ENCODE measurements at regions of chr1 and their contacts with region 1.

Region 1: DNA sequence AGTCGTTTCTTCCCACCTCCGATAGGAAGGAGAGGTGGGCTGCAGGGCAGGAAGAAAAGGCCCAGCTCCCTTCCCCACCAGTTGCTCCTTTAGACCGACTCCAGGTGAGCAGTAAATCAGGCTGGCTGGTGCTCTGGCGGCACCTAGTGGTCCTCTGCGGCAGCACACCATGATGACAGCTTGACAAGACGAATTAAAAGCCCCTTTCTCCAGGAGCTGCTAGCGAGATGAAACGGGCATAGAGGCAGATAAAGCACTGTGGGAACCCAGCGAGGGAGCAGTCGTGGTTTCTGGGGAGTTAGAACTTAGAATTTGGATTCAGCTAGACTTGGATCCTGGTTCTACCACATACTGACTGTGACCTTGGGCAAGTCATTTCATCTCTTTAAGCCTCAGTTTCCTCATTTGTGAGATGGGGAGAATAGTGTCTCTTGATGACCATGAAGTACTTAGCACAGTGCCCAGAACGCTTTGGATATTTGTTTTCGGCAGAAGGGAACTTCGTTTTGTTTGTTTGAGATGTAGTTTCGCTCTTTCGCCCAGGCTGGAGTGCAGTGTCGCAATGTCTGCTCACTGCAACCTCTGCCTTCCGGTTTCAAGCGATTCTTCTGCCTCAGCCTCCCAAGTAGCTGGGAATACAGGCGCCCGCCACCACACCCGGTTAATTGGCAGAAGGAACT is 21.8 kb upstream of the COL9A2 start:
- DNase-seq: peak; percentile 84
- ATAC-seq: peak; percentile 93
- H3K4me3 ChIP-seq: peak overlapping the region in 1 of 2 experiments; percentile 17; a peak in 2 of 4 replicates
- H3K27ac ChIP-seq: no peak overlapping the region
- H3K4me1 ChIP-seq: peaks cover 3% of the 10 kb centered on the region; the same call in 1 of the 2 replicates
- H3K27me3 ChIP-seq: no peaks in the 10 kb centered on the region
- CTCF ChIP-seq: peak; percentile 99

Region 2: GRCh38 chr1:40078512-40079333 is 260.2 kb before region 1 on chr1:
- CTCF ChIA-PET with region 1: interaction called, 6 read pairs
- POLR2A ChIA-PET with region 1: no interaction called
- in situ Hi-C with region 1: no loop called
- intact Hi-C with region 1: loop called (anchors 5 kb)
- DNase-seq: no peak
- ATAC-seq: peak; percentile 87
- H3K4me3 ChIP-seq: no peak overlapping the region
- H3K27ac ChIP-seq: no peak overlapping the region
- H3K4me1 ChIP-seq: no peaks in the 10 kb centered on the region
- H3K27me3 ChIP-seq: no peaks in the 10 kb centered on the region
- CTCF ChIP-seq: peak; percentile 90

Region 3: GRCh38 chr1:40143891-40144575 is 194.9 kb before region 1 on chr1:
- CTCF ChIA-PET with region 1: interaction called, 37 read pairs
- POLR2A ChIA-PET with region 1: no interaction called
- in situ Hi-C with region 1: no loop called
- intact Hi-C with region 1: no loop called
- DNase-seq: peak; percentile 43
- ATAC-seq: peak; percentile 95
- H3K4me3 ChIP-seq: no peak overlapping the region
- H3K27ac ChIP-seq: no peak overlapping the region
- H3K4me1 ChIP-seq: peaks cover 14% of the 10 kb centered on the region
- H3K27me3 ChIP-seq: peaks cover 26% of the 10 kb centered on the region
- CTCF ChIP-seq: peak; percentile 84

Region 4: DNA sequence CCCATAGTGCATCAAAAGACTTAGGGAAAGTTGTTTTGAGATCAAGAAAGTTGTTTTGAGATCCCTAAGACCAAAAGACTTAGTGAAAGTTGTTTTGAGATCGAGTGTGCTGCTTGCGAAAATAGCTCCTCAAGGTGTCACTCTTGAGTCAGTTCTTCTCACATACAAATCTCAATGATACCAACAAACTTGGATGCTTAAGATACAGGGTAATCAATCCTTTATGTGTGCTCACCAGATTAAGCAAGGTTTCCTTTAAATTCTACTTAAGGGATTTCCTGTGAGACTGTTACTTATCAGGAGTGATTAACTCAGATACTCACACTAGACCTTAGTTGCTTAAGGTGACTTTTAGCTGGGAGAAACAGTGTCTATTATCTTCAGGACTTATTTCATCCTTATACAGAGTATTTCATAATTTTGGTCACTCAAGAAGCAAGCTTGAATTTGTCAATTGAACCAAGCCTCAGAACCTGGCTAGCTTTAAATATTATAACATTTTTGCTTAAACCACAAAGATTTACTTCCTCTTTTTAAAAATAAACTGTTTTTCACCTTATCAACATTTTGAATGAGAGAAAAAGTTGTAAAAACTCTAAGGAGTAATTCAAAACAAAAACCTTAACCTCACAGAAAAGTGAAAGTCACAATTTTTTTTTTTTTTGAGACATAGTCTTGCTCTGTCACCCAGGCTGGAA is 185.7 kb before region 1 on chr1:
- CTCF ChIA-PET with region 1: interaction called, 18 read pairs
- POLR2A ChIA-PET with region 1: no interaction called
- in situ Hi-C with region 1: no loop called
- intact Hi-C with region 1: loop called (anchors 2 kb)
- DNase-seq: peak; percentile 59
- ATAC-seq: peak; percentile 70
- H3K4me3 ChIP-seq: peak overlapping the region in 1 of 2 experiments; percentile 15; a peak in 2 of 4 replicates
- H3K27ac ChIP-seq: no peak overlapping the region
- H3K4me1 ChIP-seq: no peaks in the 10 kb centered on the region; the same call in 1 of the 2 replicates
- H3K27me3 ChIP-seq: no peaks in the 10 kb centered on the region; the same call in 1 of the 2 replicates
- CTCF ChIP-seq: peak; percentile 79; the same call in 1 of the 2 replicates

Region 5: GRCh38 chr1:40161125-40161887 is 177.6 kb before region 1 on chr1 and contains the start of gene RLF:
- CTCF ChIA-PET with region 1: interaction called, 12 read pairs
- POLR2A ChIA-PET with region 1: no interaction called
- in situ Hi-C with region 1: no loop called
- intact Hi-C with region 1: no loop called
- DNase-seq: peak; percentile 62
- ATAC-seq: peak; percentile 99
- H3K4me3 ChIP-seq: peak within 1 kb of the TSS; percentile 62 to 98
- H3K27ac ChIP-seq: peak within 1 kb of the TSS; percentile 97
- H3K4me1 ChIP-seq: peaks cover 9% of the 10 kb centered on the region; the same call in 1 of the 2 replicates
- H3K27me3 ChIP-seq: no peaks in the 10 kb centered on the region
- CTCF ChIP-seq: no peak
- total RNA-seq, gene RLF: 15.7 TPM

Region 6: GRCh38 chr1:40178200-40178599 is 160.7 kb before region 1 on chr1:
- CTCF ChIA-PET with region 1: no interaction called
- POLR2A ChIA-PET with region 1: no interaction called
- in situ Hi-C with region 1: no loop called
- intact Hi-C with region 1: no loop called
- DNase-seq: no peak
- ATAC-seq: no peak
- H3K4me3 ChIP-seq: no peak overlapping the region
- H3K27ac ChIP-seq: no peak overlapping the region
- H3K4me1 ChIP-seq: 0 out of 2 replicates have a peak, but pooled peaks cover under 1% of the 10 kb centered on the region
- H3K27me3 ChIP-seq: no peaks in the 10 kb centered on the region
- CTCF ChIP-seq: no peak